Activated B cell treated with CpG ODN at 0.5 μM for 24 hours (primary cell): ENCODE measurements at regions of chr6 and their contacts with region 1.

Region 1: GRCh38 chr6:87174078-87174579 is 18.8 kb downstream of the ZNF292 start:
- DNase-seq: no peak
- ATAC-seq: no peak
- H3K4me3 Mint-ChIP-seq: peak overlapping the region; percentile 7
- H3K27ac Mint-ChIP-seq: peak overlapping the region; percentile 66
- H3K4me1 Mint-ChIP-seq: peaks cover 80% of the 10 kb centered on the region
- H3K27me3 Mint-ChIP-seq: no peaks in the 10 kb centered on the region
- CTCF ChIP-seq: no peak

Region 2: GRCh38 chr6:87164004-87164403 is 10.1 kb before region 1 on chr6:
- CTCF ChIA-PET with region 1: no interaction called
- POLR2A ChIA-PET with region 1: interaction called, 7 read pairs
- intact Hi-C with region 1: loop called (anchors 1 kb)
- DNase-seq: no peak
- ATAC-seq: peak; percentile 28
- H3K4me3 Mint-ChIP-seq: no peak overlapping the region
- H3K27ac Mint-ChIP-seq: peak overlapping the region; percentile 6
- H3K4me1 Mint-ChIP-seq: peaks cover 77% of the 10 kb centered on the region
- H3K27me3 Mint-ChIP-seq: no peaks in the 10 kb centered on the region
- CTCF ChIP-seq: no peak